ENCODE measurements at regions of chr17 and their contacts with region 1.

Region 1: GRCh38 chr17:43760254-43760852 is 1.8 kb upstream of the SOST start:
- DNase-seq: peak; percentile 94
- H3K4me3 Mint-ChIP-seq: no peak overlapping the region
- H3K27ac Mint-ChIP-seq: no peak overlapping the region
- H3K4me1 Mint-ChIP-seq: no peaks in the 10 kb centered on the region
- H3K27me3 Mint-ChIP-seq: peaks cover 23% of the 10 kb centered on the region

Region 2: GRCh38 chr17:43680461-43680860 is 79.9 kb before region 1 on chr17:
- CTCF ChIA-PET with region 1: interaction called, 13 read pairs
- POLR2A ChIA-PET with region 1: no interaction called
- intact Hi-C with region 1: no loop called
- DNase-seq: no peak
- H3K4me3 Mint-ChIP-seq: no peak overlapping the region
- H3K27ac Mint-ChIP-seq: no peak overlapping the region
- H3K4me1 Mint-ChIP-seq: peaks cover 5% of the 10 kb centered on the region
- H3K27me3 Mint-ChIP-seq: no peaks in the 10 kb centered on the region

Region 3: DNA sequence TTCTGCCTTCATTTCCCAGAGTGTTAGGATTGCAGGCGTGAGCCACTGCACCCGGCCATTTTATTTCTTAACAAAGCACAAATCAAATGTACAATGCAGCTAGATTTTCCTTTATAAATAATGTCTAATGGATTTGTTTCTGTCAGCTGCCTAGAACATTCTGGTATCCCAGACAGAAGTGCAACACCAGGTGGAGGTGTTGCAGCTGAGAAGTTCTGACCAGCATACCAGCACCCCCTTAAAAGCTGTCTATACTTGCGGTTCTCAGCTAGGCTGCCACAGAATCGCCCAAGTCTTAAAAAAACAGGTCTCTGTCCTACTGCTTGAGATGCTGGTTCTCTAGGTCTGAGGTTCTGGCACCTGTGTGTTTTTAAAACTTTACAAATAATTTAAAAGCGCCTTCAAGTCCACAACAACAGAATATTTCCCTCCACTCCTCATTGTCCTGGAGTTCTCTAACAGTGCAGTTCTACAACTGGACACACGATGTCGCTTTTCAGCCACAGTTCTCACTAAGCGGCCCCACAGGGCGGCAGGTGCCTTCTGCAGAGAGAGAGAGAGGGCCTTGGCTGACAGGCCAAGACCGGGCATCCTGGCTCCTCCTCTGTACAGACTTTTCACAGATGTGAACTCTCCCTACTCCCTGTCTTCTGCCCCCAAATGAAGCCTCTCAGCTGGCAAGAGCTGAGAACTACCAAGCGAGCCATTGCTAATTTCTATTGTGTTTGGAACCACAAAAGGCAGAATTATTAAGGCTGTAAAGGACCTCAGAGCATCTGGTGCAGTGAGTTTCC is 66.1 kb before region 1 on chr17:
- CTCF ChIA-PET with region 1: interaction called, 582 read pairs
- POLR2A ChIA-PET with region 1: interaction called, 3 read pairs
- intact Hi-C with region 1: loop called (anchors 1 kb)
- DNase-seq: peak; percentile 82
- H3K4me3 Mint-ChIP-seq: peak overlapping the region; percentile 1
- H3K27ac Mint-ChIP-seq: no peak overlapping the region
- H3K4me1 Mint-ChIP-seq: no peaks in the 10 kb centered on the region
- H3K27me3 Mint-ChIP-seq: no peaks in the 10 kb centered on the region

Region 4: DNA sequence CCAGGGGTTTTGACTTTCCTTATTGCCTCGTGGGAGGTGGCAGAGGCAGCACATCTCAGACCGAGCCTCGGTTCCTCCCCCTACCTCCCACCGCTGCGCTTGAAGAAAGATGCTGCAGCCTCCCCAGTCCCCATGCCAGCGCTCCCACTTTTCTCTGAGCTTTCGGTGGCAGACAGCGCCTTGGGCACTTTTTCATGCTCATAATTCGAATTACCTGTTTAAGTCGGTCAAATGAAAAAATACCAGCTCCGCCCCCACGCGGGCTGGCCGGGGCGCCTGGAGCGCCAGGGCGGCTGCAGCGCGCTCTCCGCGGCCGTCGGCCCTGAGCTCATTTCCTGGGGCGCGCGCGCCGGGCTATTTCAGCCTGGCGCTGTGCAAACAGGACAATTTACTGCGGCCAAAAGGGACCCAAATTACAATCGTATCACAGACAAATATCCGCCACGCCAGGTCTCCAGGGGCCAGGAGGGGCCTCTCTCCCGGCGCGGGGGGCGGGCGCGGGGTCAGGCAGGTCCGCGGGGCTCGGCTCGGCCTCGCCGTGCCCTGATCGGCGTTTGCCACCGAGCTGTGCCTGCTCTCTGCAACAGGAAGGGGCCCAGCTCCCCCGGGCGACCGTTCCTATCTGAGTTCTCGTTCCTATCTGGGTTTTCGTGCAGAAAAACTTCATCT is 46.7 kb before region 1 on chr17:
- CTCF ChIA-PET with region 1: interaction called, 18 read pairs
- POLR2A ChIA-PET with region 1: no interaction called
- intact Hi-C with region 1: no loop called
- DNase-seq: peak; percentile 39
- H3K4me3 Mint-ChIP-seq: peak overlapping the region; percentile 48
- H3K27ac Mint-ChIP-seq: no peak overlapping the region
- H3K4me1 Mint-ChIP-seq: peaks cover 12% of the 10 kb centered on the region
- H3K27me3 Mint-ChIP-seq: peaks cover 42% of the 10 kb centered on the region

Region 5: GRCh38 chr17:43832976-43833829 is 72.8 kb after region 1 on chr17 and contains the start of gene MPP3:
- CTCF ChIA-PET with region 1: no interaction called
- POLR2A ChIA-PET with region 1: no interaction called
- intact Hi-C with region 1: no loop called
- DNase-seq: peak; percentile 41
- H3K4me3 Mint-ChIP-seq: peak within 1 kb of the TSS; percentile 70
- H3K27ac Mint-ChIP-seq: no peak within 1 kb of the TSS
- H3K4me1 Mint-ChIP-seq: peaks cover 22% of the 10 kb centered on the region
- H3K27me3 Mint-ChIP-seq: peaks cover 23% of the 10 kb centered on the region
- total RNA-seq, gene MPP3: 0.41 to 0.62 TPM

Region 6: GRCh38 chr17:43940630-43941029 is 180.3 kb after region 1 on chr17:
- CTCF ChIA-PET with region 1: no interaction called
- POLR2A ChIA-PET with region 1: no interaction called
- intact Hi-C with region 1: no loop called
- DNase-seq: peak; percentile 30
- H3K4me3 Mint-ChIP-seq: no peak overlapping the region
- H3K27ac Mint-ChIP-seq: no peak overlapping the region
- H3K4me1 Mint-ChIP-seq: peaks cover 17% of the 10 kb centered on the region
- H3K27me3 Mint-ChIP-seq: peaks cover 4% of the 10 kb centered on the region

Region 7: DNA sequence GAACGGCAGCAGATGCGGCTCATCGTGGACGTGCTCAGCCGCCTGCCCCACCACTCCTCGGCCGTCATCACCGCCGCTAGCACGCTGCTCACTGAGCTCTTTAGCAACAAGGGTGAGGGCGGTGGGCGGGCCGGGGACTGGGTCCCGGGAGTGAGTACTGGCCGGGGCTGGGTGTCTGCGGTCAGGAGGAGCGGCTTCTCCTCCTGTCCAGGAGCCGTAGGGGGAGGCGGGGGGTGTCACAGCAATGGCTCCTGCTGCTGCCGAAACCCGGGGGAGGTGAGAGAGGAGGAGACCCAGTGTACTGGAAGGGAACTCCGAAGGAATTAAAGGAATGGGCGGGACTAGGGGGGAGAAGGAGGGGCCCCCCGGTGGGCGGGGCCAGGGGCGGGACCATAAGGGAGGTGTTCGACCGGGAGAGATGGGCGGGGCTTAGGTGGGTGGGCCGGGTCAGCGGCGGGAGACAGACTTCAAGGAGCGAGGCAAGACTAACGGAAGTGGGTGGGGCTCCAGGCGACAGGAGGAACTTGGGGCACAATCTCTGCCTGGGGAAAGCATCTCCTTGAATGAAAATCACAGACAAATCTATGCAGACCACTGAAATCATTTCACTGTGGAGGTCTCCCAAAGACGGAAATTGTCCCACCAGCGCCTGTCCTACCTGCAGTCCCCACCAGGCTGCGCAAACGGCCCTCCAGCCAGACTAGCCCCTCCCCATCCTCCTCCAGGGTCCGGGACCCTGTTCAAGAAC is 246.4 kb after region 1 on chr17:
- CTCF ChIA-PET with region 1: no interaction called
- POLR2A ChIA-PET with region 1: no interaction called
- intact Hi-C with region 1: no loop called
- DNase-seq: peak; percentile 100
- H3K4me3 Mint-ChIP-seq: peak overlapping the region; percentile 86
- H3K27ac Mint-ChIP-seq: peak overlapping the region; percentile 3
- H3K4me1 Mint-ChIP-seq: peaks cover 23% of the 10 kb centered on the region
- H3K27me3 Mint-ChIP-seq: peaks cover 6% of the 10 kb centered on the region

Region 8: GRCh38 chr17:44167181-44167861 is 407.0 kb after region 1 on chr17:
- CTCF ChIA-PET with region 1: no interaction called
- POLR2A ChIA-PET with region 1: no interaction called
- intact Hi-C with region 1: no loop called
- DNase-seq: no peak
- H3K4me3 Mint-ChIP-seq: no peak overlapping the region
- H3K27ac Mint-ChIP-seq: no peak overlapping the region
- H3K4me1 Mint-ChIP-seq: peaks cover 9% of the 10 kb centered on the region
- H3K27me3 Mint-ChIP-seq: no peaks in the 10 kb centered on the region

Measured in activated CD4-positive, alpha-beta memory T cell treated with anti-CD3 and anti-CD28 coated beads for 36 hours (primary cell).